Kidney (tissue), 22 donors: ENCODE measurements at regions of chr1 and their contacts with region 1.

Region 1: GRCh38 chr1:161209790-161210409 is 5.2 kb upstream of the FCER1G start:
- DNase-seq: peak; percentile 81 to 89 (median 84)
- H3K4me3 ChIP-seq: no peak overlapping the region
- H3K27ac ChIP-seq: peak overlapping the region in 1 of 2 donors; percentile 3
- H3K4me1 ChIP-seq: peaks cover 0 to 13% (median 4%) of the 10 kb centered on the region in 3 donors
- H3K27me3 ChIP-seq: no peaks in the 10 kb centered on the region
- CTCF ChIP-seq: peak; percentile 93

Region 2: DNA sequence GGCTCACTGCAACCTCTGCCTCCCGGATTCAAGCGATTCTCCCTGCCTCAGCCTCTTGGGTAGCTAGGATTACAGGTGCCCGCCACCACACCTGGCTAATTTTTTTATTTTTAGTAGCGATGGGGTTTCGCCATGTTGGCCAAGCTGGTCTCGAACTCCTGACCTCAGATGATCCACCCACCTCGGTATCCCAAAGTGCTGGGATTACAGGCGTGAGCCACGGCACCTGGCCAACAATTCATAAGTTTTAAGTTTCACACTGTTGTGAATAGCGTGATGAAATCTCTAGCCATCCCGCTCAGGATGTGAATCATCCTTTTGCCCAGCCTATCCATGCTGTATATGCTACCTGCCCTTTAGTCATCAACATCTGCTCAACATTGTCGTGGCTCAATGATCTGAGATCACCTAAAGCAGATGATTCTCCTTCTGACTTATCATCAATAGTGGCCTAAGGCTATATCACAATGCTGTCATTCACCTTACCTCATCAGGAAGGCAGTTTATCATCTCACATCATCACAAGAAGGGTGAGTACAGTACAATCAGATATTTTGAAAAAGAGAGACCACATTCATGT is 94.7 kb before region 1 on chr1:
- intact Hi-C with region 1: no loop called
- DNase-seq: no peak
- H3K4me3 ChIP-seq: no peak overlapping the region
- H3K27ac ChIP-seq: no peak overlapping the region
- H3K4me1 ChIP-seq: peaks cover 4 to 30% (median 23%) of the 10 kb centered on the region in 3 donors
- H3K27me3 ChIP-seq: no peaks in the 10 kb centered on the region
- CTCF ChIP-seq: no peak

Region 3: GRCh38 chr1:161266202-161266601 is 56.3 kb after region 1 on chr1:
- intact Hi-C with region 1: no loop called
- DNase-seq: no peak
- H3K4me3 ChIP-seq: no peak overlapping the region
- H3K27ac ChIP-seq: no peak overlapping the region
- H3K4me1 ChIP-seq: no peaks in the 10 kb centered on the region
- H3K27me3 ChIP-seq: no peaks in the 10 kb centered on the region
- CTCF ChIP-seq: no peak

Region 4: DNA sequence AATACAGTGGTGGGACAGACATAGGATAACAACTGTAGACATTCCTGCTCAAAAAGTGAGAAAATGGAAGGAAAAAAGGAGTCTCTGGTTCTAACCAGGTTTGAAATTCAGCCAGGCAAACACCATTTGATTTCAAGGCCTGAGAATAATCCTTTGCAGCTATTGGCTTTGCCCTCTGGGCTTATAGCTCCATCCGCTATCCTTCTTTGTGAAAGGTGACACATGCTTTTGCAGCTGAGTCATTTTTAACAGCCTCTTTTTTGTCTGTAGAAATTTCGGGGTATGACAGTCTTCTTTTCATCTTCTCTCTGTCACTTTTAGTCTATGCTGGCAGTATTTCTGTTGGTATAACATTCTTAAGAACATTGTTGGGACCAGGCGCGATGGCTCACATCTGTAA is 120.4 kb after region 1 on chr1:
- intact Hi-C with region 1: no loop called
- DNase-seq: no peak
- H3K4me3 ChIP-seq: no peak overlapping the region
- H3K27ac ChIP-seq: no peak overlapping the region
- H3K4me1 ChIP-seq: no peaks in the 10 kb centered on the region
- H3K27me3 ChIP-seq: no peaks in the 10 kb centered on the region
- CTCF ChIP-seq: no peak

Region 5: DNA sequence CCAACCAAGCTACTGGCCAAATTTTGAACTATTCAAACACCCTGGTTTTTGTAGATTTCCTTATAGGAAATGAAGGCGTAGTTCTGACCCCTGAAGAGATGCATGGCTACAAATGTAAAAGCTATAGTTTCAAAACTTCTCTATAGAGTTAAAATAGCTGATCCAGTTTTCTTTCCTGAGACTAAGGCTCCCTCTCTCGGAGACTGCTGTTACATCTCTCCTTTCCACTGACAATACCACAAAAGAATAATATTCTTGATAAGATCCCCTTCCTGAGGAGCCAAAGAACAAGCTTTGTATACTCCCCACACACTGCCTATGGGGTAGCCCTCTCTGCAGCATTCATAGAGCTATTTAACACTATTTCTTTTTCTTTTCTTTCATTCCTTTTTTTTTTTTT is 164.5 kb after region 1 on chr1:
- intact Hi-C with region 1: loop called (anchors 10 kb)
- DNase-seq: no peak
- H3K4me3 ChIP-seq: no peak overlapping the region
- H3K27ac ChIP-seq: no peak overlapping the region
- H3K4me1 ChIP-seq: no peaks in the 10 kb centered on the region
- H3K27me3 ChIP-seq: no peaks in the 10 kb centered on the region
- CTCF ChIP-seq: no peak